Left cardiac atrium (tissue), 4 donors: ENCODE measurements at regions of chr5 and their contacts with region 1.

Region 1: GRCh38 chr5:150458819-150459557 is 9.4 kb upstream of the RPS14 start:
- DNase-seq: peak; percentile 84
- ATAC-seq: peak; percentile 94 to 95

Region 2: DNA sequence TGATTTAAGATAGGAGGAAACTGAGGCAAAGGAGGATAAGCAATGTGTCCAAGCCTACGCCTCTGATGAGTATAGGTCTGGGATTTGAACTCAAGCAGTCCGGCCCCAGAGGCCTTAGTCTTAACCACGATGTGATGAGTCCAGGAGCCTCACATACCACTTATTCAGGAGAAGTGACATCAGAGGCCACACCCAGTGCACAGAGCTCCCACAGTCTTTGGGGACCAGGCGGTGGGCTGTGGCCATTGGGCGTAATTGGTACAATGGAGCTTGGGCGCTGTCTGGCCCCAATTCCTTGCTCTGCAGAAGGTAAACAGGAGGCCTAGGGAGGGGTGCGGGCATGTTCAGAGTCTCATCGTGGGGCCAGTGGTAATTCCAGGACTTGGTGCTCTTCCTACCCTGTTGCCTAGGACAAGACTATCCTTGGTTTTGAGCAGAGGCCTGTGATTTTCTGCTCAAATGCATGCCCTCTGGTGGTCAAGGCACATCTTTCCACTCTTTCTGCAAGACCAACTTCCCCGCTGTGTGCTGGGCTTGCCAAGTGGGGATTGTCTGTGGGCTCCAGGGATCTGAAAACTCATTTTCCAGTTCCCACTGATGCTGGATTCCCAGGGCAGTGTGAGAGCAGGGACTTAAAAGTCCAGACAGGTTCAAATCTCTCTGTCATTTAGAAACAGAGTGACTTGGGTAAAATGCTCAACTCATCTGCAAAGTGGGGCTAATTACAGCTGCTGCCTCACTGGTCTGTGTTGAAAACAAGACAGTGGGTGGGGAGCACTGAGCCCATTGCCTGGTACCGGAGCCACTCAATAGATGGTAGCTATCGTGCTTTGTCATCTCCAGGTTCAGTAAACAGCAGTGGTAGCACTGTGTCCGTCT is 64.7 kb after region 1 on chr5:
- intact Hi-C with region 1: loop called in 1 of 2 experiments (anchors 1 kb)
- DNase-seq: no peak
- ATAC-seq: peak; percentile 61 to 66

Region 3: DNA sequence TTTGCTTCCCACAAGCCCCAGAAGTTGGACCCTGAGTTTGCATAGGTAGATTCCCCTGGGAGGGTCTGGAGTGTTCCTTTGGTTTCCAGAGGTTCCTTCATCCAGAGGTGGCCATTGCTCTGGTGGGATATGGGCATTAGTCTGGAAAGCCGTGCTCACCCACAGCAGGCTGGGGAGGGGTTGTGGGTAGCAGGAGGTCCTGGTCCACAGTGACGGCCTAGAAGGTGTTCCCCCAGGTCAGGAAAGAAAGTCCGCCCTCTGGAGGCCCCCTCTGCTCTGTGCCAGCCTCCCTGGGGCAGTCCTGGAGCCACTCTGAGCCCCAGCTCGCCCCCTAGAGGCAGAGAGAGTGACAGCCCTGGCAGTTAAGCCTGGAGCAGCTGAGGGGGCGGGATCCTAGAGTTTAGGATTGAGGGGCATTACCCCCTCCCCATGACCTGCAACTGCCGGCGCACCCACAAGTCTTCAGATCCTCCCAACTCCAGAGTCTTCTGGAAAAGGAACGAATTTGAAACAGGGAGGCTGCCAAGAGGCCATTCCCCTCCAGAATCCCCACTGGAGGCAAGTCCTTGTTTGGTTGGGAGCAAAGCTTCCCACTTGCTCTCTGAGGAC is 85.7 kb after region 1 on chr5:
- intact Hi-C with region 1: loop called (anchors 2 to 5 kb)
- DNase-seq: peak; percentile 78
- ATAC-seq: peak; percentile 78 to 87

Region 4: DNA sequence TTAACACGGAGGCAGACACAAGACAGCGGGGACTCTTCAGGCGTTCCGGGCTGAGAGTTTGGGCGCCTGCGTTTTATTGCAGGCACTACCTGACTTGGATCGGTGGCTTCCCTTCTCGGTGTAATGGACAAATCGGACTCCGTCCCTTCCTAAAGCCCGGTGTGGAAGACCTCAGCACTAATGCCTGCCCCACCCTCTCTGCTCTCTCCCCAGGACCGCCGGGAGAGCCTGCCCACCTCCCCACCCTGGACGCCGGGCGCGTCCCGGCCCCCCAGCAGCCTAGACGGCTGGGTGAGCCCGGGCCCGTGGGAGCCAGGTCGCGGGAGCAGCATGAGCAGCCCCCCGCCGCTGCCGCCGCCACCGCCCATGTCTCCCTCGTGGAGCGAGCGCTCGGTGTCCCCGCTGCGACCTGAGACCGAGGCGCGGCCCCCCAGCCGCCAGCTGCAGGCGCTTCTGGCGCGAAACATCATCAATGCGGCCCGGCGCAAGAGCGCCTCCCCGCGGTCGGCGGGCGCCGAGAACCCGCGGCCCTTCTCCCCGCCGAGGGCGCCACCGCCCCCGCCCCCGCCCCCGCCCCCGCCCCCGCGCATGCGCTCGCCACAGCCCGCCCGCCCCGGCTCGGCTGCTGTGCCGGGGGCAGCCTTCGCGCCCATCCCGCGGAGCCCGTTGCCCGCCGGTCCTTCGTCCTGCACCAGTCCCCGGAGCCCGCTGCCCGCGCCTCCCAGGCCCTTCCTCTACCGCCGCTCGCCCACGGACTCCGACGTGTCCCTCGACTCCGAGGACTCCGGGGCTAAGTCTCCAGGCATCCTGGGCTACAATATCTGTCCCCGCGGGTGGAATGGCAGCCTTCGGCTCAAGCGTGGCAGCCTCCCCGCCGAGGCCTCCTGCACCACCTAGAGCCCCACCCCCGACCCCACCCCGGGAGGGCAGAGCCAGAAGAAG is 197.5 kb after region 1 on chr5:
- intact Hi-C with region 1: no loop called
- DNase-seq: peak; percentile 76
- ATAC-seq: peak; percentile 61 to 80